ENCODE measurements at regions of chr5 and their contacts with region 1.

Region 1: GRCh38 chr5:141524604-141525597 is 36.0 kb downstream of the PCDHGC5 start:
- DNase-seq: peak; percentile 56
- H3K4me3 Mint-ChIP-seq: no peak overlapping the region
- H3K27ac Mint-ChIP-seq: no peak overlapping the region
- H3K4me1 Mint-ChIP-seq: peaks cover 9% of the 10 kb centered on the region
- H3K27me3 Mint-ChIP-seq: no peaks in the 10 kb centered on the region

Region 2: DNA sequence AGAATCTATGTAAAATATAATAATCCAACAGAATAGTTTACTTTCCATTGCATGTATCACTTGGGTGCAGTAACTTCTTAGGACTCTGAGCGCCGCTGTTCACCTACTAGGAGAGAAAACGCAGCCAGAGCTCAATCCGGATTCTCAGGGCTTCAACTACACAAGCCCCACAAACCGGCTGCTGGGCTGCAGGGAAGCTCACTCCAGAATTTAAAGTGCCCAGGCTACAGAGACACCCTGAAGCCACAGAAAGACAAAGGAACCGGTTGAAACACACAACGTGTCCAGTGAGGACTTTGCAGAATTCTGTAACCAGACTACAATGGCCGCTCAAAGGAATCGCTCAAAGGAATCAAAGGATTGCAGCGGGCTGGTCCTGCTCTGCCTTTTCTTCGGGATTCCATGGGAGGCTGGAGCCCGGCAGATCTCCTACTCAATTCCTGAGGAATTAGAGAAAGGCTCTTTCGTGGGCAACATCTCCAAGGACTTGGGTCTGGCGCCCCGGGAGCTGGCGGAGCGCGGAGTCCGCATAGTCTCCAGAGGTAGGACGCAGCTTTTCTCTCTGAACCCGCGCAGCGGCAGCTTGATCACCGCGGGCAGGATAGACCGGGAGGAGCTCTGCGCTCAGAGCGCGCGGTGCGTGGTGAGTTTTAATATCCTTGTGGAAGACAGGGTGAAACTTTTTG is 111.9 kb before region 1 on chr5 and contains the start of gene PCDHGA10:
- CTCF ChIA-PET with region 1: interaction called, 10 read pairs
- DNase-seq: peak; percentile 72
- H3K4me3 Mint-ChIP-seq: peak within 1 kb of the TSS; percentile 78
- H3K27ac Mint-ChIP-seq: peak within 1 kb of the TSS; percentile 74
- H3K4me1 Mint-ChIP-seq: peaks cover 21% of the 10 kb centered on the region
- H3K27me3 Mint-ChIP-seq: peaks cover 79% of the 10 kb centered on the region

Region 3: DNA sequence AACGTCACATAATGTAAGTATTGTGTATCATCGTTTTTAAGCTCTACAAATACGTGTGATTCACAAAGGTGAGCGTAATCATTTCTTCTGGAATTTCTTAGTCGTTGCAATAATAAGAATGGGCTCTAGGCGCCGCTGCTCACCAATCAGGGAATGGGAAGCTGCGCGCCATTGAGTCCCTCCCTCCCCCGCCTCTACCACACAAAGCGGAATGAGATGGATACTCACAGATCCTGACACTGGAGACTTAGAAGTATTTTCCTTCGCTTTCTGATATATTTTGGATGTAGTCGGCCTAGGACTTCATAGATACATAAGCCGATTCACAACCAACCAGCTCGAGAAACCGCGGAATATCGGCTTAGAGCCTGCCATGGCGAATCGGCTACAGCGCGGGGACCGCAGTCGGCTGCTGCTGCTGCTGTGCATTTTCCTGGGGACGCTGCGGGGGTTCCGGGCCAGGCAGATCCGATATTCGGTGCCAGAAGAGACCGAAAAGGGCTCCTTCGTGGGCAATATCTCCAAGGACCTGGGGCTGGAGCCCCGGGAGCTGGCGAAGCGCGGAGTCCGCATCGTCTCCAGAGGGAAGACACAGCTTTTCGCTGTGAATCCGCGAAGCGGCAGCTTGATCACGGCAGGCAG is 103.9 kb before region 1 on chr5 and contains the start of gene PCDHGA11:
- CTCF ChIA-PET with region 1: interaction called, 12 read pairs
- DNase-seq: peak; percentile 52
- H3K4me3 Mint-ChIP-seq: peak within 1 kb of the TSS; percentile 76
- H3K27ac Mint-ChIP-seq: peak within 1 kb of the TSS; percentile 77
- H3K4me1 Mint-ChIP-seq: peaks cover 16% of the 10 kb centered on the region
- H3K27me3 Mint-ChIP-seq: peaks cover 69% of the 10 kb centered on the region

Region 4: GRCh38 chr5:141430332-141431113 is 94.4 kb before region 1 on chr5 and contains the start of gene PCDHGA12:
- CTCF ChIA-PET with region 1: interaction called, 14 read pairs
- DNase-seq: peak; percentile 36
- H3K4me3 Mint-ChIP-seq: peak within 1 kb of the TSS; percentile 67
- H3K27ac Mint-ChIP-seq: peak within 1 kb of the TSS; percentile 82
- H3K4me1 Mint-ChIP-seq: peaks cover 12% of the 10 kb centered on the region
- H3K27me3 Mint-ChIP-seq: peaks cover 59% of the 10 kb centered on the region